ENCODE measurements at regions of chr2 and their contacts with region 1.

Region 1: DNA sequence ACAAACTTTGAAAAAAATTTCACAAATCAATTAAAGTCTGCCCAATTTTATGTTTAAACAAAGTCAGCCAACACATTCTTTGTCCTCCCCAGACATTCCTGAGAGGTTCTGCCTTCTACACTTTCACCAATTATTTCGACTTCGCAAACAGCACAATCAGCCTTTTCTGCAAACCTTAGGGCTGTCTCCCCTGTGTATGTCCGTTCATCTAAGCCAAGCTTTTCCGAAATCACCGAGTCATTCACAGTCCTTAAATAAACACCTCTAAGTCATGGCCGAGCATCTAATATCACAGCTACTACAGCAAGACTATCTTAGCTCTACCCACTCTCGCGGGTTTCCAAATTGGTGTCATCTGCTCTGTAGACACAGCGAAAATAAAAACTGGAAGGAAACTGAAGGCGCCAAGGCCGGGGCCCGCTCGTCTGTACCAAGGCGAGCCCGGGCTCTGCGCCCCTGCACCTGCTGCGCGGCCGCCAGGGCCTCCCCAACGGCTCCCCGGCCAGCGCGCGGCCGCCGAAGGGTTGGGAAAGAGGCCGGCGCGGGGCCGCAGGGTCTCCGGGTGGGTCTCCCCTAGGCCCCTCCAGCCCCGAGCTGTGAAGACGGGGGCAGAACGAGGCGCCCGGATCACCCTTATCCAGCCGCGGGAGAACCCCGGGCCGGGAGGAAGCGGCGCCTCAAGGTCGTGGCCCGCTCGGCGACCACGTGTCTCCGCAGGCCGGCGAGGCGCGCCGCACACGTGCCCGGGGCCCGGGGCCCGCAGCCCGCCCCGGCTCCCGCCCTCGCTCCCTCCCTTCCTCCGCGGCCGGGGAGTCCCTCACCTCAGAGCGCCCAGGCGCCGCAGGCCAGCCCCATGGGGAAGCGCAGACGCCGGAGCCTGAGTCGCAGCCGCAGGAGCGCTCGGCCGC is 573 bp downstream of the ODC1 start:
- DNase-seq: no peak
- H3K4me3 ChIP-seq: peak overlapping the region; percentile 63
- H3K27me3 ChIP-seq: no peaks in the 10 kb centered on the region
- CTCF ChIP-seq: peak; percentile 12; the same call in 1 of the 2 replicates

Region 2: GRCh38 chr2:10141736-10142642 is 305.6 kb before region 1 on chr2:
- CTCF ChIA-PET with region 1: no interaction called
- POLR2A ChIA-PET with region 1: no interaction called
- DNase-seq: no peak
- H3K4me3 ChIP-seq: no peak overlapping the region
- H3K27me3 ChIP-seq: no peaks in the 10 kb centered on the region
- CTCF ChIP-seq: peak; percentile 56

Region 3: GRCh38 chr2:10688921-10689807 is 241.6 kb after region 1 on chr2:
- CTCF ChIA-PET with region 1: no interaction called
- POLR2A ChIA-PET with region 1: interaction called, 16 read pairs
- DNase-seq: no peak
- H3K4me3 ChIP-seq: peak overlapping the region; percentile 93
- H3K27me3 ChIP-seq: no peaks in the 10 kb centered on the region
- CTCF ChIP-seq: no peak

Region 4: DNA sequence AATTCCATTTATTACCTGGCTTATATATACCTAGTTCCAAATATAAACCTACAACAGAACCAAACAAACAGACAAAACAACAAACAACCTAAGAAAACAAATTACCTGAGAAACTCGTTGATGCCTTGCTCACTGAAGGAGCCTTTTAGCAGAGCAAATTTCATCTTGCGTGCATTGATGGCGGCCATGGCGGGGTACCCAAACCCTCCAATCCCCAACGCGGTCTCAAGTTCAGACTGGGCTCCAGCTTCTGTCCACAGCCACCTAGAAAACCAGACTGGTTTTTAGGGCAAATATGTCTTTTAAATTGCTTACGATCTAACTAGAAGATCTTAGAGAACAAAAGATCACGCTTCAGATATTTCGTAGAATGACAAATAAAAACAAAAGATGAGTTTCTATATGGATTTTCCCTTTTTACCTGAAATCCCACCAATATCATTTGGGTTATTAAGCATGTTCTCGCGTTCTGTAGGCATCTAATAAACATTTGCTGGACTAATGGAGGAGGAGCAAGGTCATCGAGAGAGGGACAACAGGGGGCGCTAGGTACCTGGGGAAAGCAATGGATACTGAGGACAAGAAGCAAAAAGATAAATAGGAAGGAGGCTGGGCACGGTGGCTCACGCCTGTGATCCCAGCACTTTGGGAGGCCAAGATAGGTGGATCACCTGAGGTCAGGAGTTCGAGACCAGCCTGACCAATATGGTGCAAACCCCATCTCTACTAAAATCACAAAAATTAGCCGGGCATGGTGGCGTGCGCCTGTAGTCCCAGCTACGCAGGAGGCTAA is 339.8 kb after region 1 on chr2:
- CTCF ChIA-PET with region 1: no interaction called
- POLR2A ChIA-PET with region 1: no interaction called
- DNase-seq: no peak
- H3K4me3 ChIP-seq: no peak overlapping the region
- H3K27me3 ChIP-seq: no peaks in the 10 kb centered on the region
- CTCF ChIP-seq: peak; percentile 20; the same call in 1 of the 2 replicates

Measured in BJ (cell line).